A673 (cell line): ENCODE measurements at regions of chr12 and their contacts with region 1.

Region 1: GRCh38 chr12:55092579-55092978 is 33.6 kb upstream of the OR9K2 start:
- DNase-seq: no peak
- H3K4me3 ChIP-seq: no peak overlapping the region
- H3K27ac ChIP-seq: no peak overlapping the region
- H3K4me1 ChIP-seq: no peaks in the 10 kb centered on the region
- H3K27me3 ChIP-seq: peaks cover 39% of the 10 kb centered on the region
- CTCF ChIP-seq: no peak; the same call in 1 of the 2 replicates

Region 2: DNA sequence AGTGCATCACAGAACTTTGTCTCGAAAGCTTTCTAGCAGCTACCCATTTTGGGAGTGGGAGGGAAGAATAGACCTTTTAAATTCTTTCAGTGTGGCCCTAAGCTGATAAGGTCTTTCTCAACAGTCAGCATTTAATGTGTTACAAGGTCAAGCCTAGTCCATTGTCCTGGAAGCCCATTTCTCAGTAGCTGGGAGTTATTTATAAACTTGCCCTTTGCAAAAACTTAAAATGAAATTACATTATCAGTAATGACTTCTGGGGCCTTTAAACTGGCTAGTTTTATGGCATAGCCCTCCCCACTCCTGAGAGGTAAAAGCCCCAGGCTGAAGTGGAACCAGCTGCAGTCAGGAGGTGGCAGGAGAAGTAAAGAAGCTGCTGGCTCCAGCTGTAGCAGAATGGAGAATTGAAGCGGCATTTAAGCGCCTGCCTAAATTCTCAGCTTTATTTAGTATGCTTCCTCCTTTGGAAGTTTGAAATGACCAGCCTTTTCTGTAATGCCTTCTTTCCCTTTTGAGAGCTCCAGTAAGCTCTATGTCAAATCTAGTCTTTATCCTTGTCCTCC is 755.2 kb before region 1 on chr12:
- CTCF ChIA-PET with region 1: no interaction called
- POLR2A ChIA-PET with region 1: no interaction called
- intact Hi-C with region 1: no loop called
- DNase-seq: no peak
- H3K4me3 ChIP-seq: no peak overlapping the region
- H3K27ac ChIP-seq: no peak overlapping the region
- H3K4me1 ChIP-seq: peaks cover 11% of the 10 kb centered on the region
- H3K27me3 ChIP-seq: no peaks in the 10 kb centered on the region
- CTCF ChIP-seq: no peak

Region 3: DNA sequence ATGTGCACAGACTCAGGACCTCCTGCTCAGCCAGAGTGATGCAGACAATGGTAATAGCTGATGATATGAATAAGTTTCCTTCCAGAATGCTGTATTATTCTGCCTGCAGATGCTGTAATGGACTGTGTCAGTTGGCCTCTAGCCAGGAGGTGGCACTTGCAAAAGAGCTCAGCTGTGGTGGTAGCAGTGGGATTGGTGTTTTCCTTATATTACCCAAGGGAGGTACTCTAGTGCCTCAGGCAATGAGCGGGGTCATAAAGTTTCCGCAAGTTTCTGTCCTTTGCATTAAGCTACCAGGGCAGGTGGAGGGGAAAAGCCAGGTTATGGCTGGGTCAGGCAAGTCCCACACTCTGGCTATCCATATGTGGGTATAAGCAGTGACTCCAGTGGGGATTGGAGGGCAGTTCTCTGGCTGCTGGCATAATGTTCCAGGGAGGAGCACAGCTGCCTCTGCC is 252.2 kb before region 1 on chr12:
- CTCF ChIA-PET with region 1: no interaction called
- POLR2A ChIA-PET with region 1: interaction called, 11 read pairs
- intact Hi-C with region 1: no loop called
- DNase-seq: peak; percentile 24
- H3K4me3 ChIP-seq: no peak overlapping the region
- H3K27ac ChIP-seq: no peak overlapping the region
- H3K4me1 ChIP-seq: no peaks in the 10 kb centered on the region
- H3K27me3 ChIP-seq: peaks cover 7% of the 10 kb centered on the region
- CTCF ChIP-seq: no peak

Region 4: GRCh38 chr12:55817346-55818139 is 725.0 kb after region 1 on chr12 and contains the starts of genes ORMDL2 and SARNP:
- CTCF ChIA-PET with region 1: no interaction called
- POLR2A ChIA-PET with region 1: no interaction called
- intact Hi-C with region 1: no loop called
- DNase-seq: peak; percentile 100
- H3K4me3 ChIP-seq: peak within 1 kb of the TSS; percentile 71
- H3K27ac ChIP-seq: peak within 1 kb of the TSS; percentile 75
- H3K4me1 ChIP-seq: peaks cover 17% of the 10 kb centered on the region
- H3K27me3 ChIP-seq: no peaks in the 10 kb centered on the region
- CTCF ChIP-seq: no peak
- total RNA-seq, gene ORMDL2: 32.3 and 35.4 TPM in 2 replicates
- total RNA-seq, gene SARNP: 104 and 115 TPM in 2 replicates